Heart left ventricle (tissue), 16 donors: ENCODE measurements at regions of chr22 and their contacts with region 1.

Region 1: DNA sequence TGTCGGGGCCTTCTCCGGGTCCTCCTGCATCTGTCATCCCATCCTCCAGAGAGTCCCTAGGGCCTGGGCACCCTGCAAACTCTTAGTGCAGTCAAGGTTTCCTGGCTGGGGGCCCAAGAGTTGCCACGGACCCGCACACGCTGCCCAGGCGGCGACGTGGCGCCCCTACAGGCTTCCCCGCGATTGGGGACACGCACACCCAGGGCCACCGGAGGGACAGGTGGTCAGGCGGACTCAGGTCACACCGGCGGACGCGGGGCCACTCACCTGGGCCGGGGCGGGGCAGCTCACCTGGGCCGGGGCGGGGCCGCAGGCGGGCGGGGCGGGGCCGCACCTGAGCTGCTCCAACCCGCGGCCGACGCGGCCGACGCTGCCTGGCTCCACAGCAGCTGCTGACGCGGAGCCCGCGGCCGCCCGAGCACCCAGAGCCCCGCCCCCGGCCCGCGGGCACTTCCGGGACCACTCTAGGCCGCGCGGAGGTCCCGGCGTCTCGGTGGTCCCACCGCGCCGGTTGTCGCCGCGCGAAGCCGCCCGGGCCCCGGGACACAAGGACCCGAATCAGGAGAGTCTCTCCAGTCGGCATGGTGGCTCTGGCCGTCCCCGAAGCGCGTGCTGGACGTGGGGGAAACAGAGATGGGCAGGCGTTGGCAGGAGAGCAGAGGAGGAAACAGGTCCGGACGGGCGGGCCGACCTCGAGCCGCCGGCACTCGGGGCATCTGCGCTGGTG is at the start of gene ZNF70:
- DNase-seq: peak; percentile 86 to 93 (median 87)
- ATAC-seq: peak; percentile 78 to 96 (median 91)
- H3K4me3 ChIP-seq: peak within 1 kb of the TSS; percentile 46 to 81 (median 71)
- H3K27ac ChIP-seq: peak within 1 kb of the TSS; percentile 63 to 92 (median 86)
- H3K4me1 ChIP-seq: peaks cover 0 to 22% (median 8%) of the 10 kb centered on the region in 12 donors
- H3K27me3 ChIP-seq: no peaks in the 10 kb centered on the region
- CTCF ChIP-seq: peak in 4 of 12 donors; percentile 5 to 37 (median 32)
- POLR2A ChIP-seq: peak in 1 of 2 donors; percentile 55
- total RNA-seq, gene ZNF70: 2.7 to 4.6 (median 3.3) TPM

Region 2: GRCh38 chr22:23675492-23676415 is 75.1 kb before region 1 on chr22:
- intact Hi-C with region 1: no loop called
- DNase-seq: no peak
- ATAC-seq: peak in 3 of 4 donors; percentile 38 to 48 (median 46)
- H3K4me3 ChIP-seq: no peak overlapping the region
- H3K27ac ChIP-seq: no peak overlapping the region
- H3K4me1 ChIP-seq: peaks cover 0 to 10% (median 0%) of the 10 kb centered on the region in 12 donors
- H3K27me3 ChIP-seq: no peaks in the 10 kb centered on the region
- CTCF ChIP-seq: no peak
- POLR2A ChIP-seq: no peak

Region 3: DNA sequence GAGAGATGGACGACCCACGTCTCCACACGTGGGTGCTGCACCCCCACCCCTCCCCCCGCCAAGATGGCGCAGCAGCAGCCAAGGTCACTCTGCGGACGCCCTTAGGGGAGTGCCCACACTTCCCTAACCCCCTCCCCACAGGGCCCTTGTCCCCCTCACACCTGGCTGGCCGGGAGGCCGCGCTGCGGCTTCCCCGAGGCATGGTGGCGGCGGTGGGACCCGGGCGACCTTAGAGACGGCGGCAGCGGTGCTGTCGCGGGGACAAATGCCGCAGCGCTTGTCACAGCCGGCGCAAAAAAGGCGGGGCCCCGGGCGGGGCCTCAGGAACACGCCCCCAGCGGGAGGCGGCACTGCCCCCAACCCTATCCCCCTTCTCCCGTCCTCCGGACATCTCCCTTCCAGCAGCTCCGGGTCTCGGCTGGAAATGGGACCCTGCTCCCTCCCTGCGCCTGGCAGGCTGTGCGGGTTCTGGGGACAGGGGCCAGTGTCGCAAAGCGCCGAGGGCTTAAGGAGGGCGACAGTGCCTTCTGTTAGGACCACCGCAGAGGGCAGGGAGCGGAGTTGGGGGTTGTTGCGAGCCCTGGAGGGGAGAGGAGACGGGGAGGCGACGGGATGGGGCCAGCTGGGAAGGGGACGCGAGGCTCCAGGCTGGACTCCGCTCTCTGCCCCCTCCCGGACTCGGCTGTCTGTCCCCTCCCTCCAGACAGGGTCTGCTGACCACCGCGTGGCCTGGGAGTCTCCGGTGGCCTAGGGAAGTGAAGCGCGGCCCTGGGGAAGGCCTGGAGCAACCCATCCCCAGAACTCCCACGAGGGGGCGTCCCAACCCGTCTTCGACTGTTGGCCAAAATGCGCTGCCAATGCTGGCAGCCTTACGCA is 17.0 kb after region 1 on chr22 and contains the start of gene CHCHD10:
- intact Hi-C with region 1: loop called in 1 of 10 experiments (anchors 2 kb)
- DNase-seq: peak; percentile 88 to 92 (median 90)
- ATAC-seq: peak; percentile 73 to 87 (median 82)
- H3K4me3 ChIP-seq: peak within 1 kb of the TSS; percentile 30 to 91 (median 66)
- H3K27ac ChIP-seq: peak within 1 kb of the TSS; percentile 82 to 97 (median 90)
- H3K4me1 ChIP-seq: peaks cover 0 to 70% (median 43%) of the 10 kb centered on the region in 12 donors
- H3K27me3 ChIP-seq: no peaks in the 10 kb centered on the region
- CTCF ChIP-seq: peak; percentile 73 to 92 (median 86)
- POLR2A ChIP-seq: peak; percentile 92 to 97
- total RNA-seq, gene CHCHD10: 374 to 1,458 (median 944) TPM